ENCODE measurements at regions of chr10 and their contacts with region 1.

Region 1: DNA sequence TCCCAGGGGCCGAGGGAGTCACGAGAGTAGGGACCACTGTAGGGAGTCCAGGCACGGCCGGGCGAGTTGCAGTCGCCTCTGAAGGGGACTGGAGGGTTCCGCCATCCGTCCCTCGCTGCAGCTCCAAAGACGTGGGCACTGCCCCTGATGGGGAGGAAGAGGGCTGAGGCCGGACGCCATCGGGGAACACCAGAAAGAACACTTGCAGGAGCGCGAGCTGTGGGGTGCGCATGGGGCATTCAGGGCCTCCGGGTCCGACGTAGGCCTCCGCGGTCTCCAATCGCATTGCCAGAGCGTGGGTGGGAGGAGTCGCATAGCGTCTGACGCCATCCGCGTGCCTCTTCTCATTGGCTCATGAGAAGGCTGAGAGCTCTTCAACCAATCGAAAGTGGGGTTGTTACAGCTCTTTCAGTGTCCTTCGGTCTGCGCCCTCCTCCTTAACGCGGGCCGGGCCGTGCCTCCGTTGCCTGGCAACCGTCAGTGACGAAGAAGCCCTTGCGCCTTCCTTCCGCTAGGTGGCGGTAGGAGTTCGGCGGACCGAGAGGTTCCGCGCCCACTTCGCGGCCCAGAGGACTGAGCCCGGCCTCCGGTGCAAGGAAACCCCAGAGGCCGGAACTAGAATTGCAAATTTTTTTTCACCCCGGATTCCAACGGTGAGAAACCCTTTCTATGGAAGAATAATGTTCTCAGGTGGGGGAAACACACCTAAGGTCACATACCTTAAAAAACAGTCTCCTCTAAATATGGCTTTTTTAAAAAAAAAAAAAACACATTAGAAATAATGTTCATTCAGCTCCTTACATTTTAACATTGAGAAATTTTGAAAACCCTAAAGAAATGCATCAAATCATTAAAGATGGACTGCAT is at the start of gene TCTN3:
- DNase-seq: peak; percentile 100
- H3K4me3 ChIP-seq: peak within 1 kb of the TSS; percentile 48 to 83 (median 68)
- H3K27ac ChIP-seq: peak within 1 kb of the TSS; percentile 26
- H3K4me1 ChIP-seq: peaks cover 13% of the 10 kb centered on the region
- H3K27me3 ChIP-seq: no peaks in the 10 kb centered on the region
- CTCF ChIP-seq: peak; percentile 99 to 100
- POLR2A ChIP-seq: peak; percentile 67
- total RNA-seq, gene TCTN3: 40.4 and 42.9 TPM in 2 replicates

Region 2: GRCh38 chr10:95567903-95568644 is 125.8 kb before region 1 on chr10:
- CTCF ChIA-PET with region 1: no interaction called
- POLR2A ChIA-PET with region 1: no interaction called
- dilution Hi-C with region 1: no loop called
- intact Hi-C with region 1: no loop called
- DNase-seq: peak; percentile 21
- H3K4me3 ChIP-seq: no peak overlapping the region
- H3K27ac ChIP-seq: no peak overlapping the region
- H3K4me1 ChIP-seq: no peaks in the 10 kb centered on the region
- H3K27me3 ChIP-seq: peaks cover 0 to 8% of the 10 kb centered on the region in 2 experiments
- CTCF ChIP-seq: no peak
- POLR2A ChIP-seq: no peak

Region 3: GRCh38 chr10:95656291-95657164 is 37.4 kb before region 1 on chr10 and contains the start of gene ALDH18A1:
- CTCF ChIA-PET with region 1: interaction called, 22 read pairs
- POLR2A ChIA-PET with region 1: no interaction called
- dilution Hi-C with region 1: no loop called
- intact Hi-C with region 1: loop called (anchors 1 kb)
- DNase-seq: peak; percentile 93
- H3K4me3 ChIP-seq: peak within 1 kb of the TSS; percentile 73 to 93 (median 89)
- H3K27ac ChIP-seq: peak within 1 kb of the TSS; percentile 64
- H3K4me1 ChIP-seq: peaks cover 11% of the 10 kb centered on the region
- H3K27me3 ChIP-seq: no peaks in the 10 kb centered on the region
- CTCF ChIP-seq: no peak
- POLR2A ChIP-seq: peak; percentile 78
- total RNA-seq, gene ALDH18A1: 88.9 and 92.6 TPM in 2 replicates

Region 4: DNA sequence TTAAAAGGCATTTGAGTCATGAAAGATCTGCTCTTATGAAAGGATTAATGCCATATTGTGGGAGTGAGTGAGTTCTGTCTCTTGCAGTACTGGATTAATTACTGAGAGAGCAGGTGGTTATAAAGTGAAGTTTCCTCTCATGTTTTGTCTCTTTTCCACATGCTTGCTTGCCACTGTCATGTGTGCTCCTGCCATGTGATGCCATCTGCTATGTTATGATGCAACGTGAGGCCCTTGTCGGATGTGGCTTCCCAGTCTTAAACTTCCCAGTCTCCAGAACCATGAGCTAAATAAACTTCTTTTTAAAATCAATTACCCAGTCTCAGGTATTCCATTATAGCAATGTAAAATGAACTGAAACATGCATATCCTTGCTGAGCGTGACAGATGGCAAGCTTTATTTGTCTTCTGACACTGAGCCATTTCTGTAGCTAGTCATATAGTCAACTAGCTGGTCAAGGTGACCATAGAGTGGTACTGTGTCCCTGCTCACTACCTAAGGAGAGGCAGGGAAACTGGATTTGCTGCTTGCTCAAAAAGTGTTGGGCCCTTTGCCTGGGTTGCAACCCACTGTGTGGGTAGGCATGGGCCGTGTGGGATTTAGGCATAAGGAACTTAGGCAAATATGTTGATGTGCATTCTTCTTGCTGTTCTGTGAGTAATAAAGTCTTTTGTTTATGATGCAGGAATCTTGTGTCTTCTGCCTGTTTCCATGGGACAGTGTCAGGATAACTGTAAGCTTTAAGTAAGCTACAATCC is 22.7 kb after region 1 on chr10:
- CTCF ChIA-PET with region 1: interaction called, 11 read pairs
- POLR2A ChIA-PET with region 1: no interaction called
- dilution Hi-C with region 1: no loop called
- intact Hi-C with region 1: no loop called
- DNase-seq: no peak
- H3K4me3 ChIP-seq: no peak overlapping the region
- H3K27ac ChIP-seq: no peak overlapping the region
- H3K4me1 ChIP-seq: peaks cover 2% of the 10 kb centered on the region
- H3K27me3 ChIP-seq: no peaks in the 10 kb centered on the region
- CTCF ChIP-seq: no peak
- POLR2A ChIP-seq: no peak

Region 5: GRCh38 chr10:95761939-95762492 is 68.1 kb after region 1 on chr10:
- CTCF ChIA-PET with region 1: interaction called, 43 read pairs
- POLR2A ChIA-PET with region 1: no interaction called
- dilution Hi-C with region 1: no loop called
- intact Hi-C with region 1: loop called (anchors 1 kb)
- DNase-seq: peak; percentile 79
- H3K4me3 ChIP-seq: no peak overlapping the region
- H3K27ac ChIP-seq: peak overlapping the region; percentile 16
- H3K4me1 ChIP-seq: peaks cover 29% of the 10 kb centered on the region
- H3K27me3 ChIP-seq: no peaks in the 10 kb centered on the region
- CTCF ChIP-seq: no peak
- POLR2A ChIP-seq: no peak

Region 6: DNA sequence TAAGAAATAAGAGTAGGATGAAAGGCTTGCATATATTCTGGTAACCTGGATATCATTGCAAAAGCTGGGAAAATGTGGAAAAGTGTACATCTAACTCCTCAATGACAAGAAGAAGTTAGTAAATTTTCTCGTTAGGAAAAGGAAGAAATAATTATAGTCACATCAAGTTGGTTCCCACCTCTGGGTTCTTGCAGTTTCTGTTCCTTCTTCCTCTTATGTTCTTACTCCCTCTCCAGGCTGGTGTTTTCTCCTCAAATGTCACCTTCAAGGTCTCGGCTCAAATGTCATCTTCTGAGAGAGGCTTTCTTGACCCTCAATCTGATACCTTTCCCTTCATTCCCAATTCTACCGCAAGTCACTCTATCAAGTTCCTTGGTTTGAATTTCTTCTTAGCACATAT is 126.5 kb after region 1 on chr10:
- CTCF ChIA-PET with region 1: interaction called, 35 read pairs
- POLR2A ChIA-PET with region 1: no interaction called
- dilution Hi-C with region 1: no loop called
- intact Hi-C with region 1: loop called (anchors 1 kb)
- DNase-seq: no peak
- H3K4me3 ChIP-seq: no peak overlapping the region
- H3K27ac ChIP-seq: no peak overlapping the region
- H3K4me1 ChIP-seq: peaks cover 34% of the 10 kb centered on the region
- H3K27me3 ChIP-seq: no peaks in the 10 kb centered on the region
- CTCF ChIP-seq: no peak
- POLR2A ChIP-seq: no peak

Region 7: GRCh38 chr10:95907456-95908253 is 213.8 kb after region 1 on chr10 and contains the start of gene CC2D2B:
- CTCF ChIA-PET with region 1: interaction called, 26 read pairs
- POLR2A ChIA-PET with region 1: no interaction called
- dilution Hi-C with region 1: no loop called
- intact Hi-C with region 1: loop called (anchors 1 kb)
- DNase-seq: peak; percentile 89
- H3K4me3 ChIP-seq: peak within 1 kb of the TSS; percentile 15 to 80 (median 68)
- H3K27ac ChIP-seq: peak within 1 kb of the TSS; percentile 16
- H3K4me1 ChIP-seq: peaks cover 4% of the 10 kb centered on the region
- H3K27me3 ChIP-seq: peaks cover 0 to 1% of the 10 kb centered on the region in 2 experiments
- CTCF ChIP-seq: peak; percentile 22
- POLR2A ChIP-seq: peak; percentile 77
- total RNA-seq, gene CC2D2B: 0.53 and 1.2 TPM in 2 replicates

Measured in endothelial cell of umbilical vein (primary cell).